Activated CD8-positive, alpha-beta T cell treated with anti-CD3 and anti-CD28 coated beads, Interleukin-2, amount 10 ng/mL, durations not matched to agents 7 days and 5 days (primary cell): ENCODE measurements at regions of chr1 and their contacts with region 1.

Region 1: DNA sequence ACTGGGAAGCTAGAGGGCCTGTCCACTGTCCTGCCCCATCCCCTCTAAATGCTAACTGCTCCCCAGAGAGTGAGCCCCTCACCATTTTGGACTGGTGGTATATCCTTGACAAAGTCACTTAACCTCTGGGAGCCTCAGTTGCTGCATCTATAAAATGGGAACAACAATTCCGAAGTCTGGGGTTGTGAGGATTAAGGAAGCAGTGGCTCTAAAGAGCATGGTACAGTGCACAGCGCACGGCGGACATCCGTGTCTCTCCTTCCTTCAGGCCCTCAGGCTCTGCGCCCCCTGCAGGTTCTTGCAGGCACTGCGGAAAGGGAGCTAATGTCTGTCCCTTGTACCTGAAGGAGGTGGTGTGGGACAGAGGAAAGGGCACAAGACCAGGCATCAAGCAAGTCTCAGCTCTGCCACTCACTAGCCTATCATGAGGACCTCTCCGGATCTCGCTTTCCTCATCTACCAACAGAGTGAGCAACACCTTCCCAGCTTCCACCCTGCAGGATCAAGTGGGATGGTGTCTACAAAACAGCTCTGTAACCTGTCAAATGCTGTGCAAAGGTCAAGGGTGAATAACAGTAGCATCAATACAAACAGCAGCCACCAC is 20.1 kb downstream of the ECE1 start:
- DNase-seq: peak; percentile 85
- ATAC-seq: peak; percentile 89
- H3K4me3 Mint-ChIP-seq: no peak overlapping the region
- H3K27ac Mint-ChIP-seq: no peak overlapping the region
- H3K4me1 Mint-ChIP-seq: peaks cover 14% of the 10 kb centered on the region
- H3K27me3 Mint-ChIP-seq: no peaks in the 10 kb centered on the region

Region 2: DNA sequence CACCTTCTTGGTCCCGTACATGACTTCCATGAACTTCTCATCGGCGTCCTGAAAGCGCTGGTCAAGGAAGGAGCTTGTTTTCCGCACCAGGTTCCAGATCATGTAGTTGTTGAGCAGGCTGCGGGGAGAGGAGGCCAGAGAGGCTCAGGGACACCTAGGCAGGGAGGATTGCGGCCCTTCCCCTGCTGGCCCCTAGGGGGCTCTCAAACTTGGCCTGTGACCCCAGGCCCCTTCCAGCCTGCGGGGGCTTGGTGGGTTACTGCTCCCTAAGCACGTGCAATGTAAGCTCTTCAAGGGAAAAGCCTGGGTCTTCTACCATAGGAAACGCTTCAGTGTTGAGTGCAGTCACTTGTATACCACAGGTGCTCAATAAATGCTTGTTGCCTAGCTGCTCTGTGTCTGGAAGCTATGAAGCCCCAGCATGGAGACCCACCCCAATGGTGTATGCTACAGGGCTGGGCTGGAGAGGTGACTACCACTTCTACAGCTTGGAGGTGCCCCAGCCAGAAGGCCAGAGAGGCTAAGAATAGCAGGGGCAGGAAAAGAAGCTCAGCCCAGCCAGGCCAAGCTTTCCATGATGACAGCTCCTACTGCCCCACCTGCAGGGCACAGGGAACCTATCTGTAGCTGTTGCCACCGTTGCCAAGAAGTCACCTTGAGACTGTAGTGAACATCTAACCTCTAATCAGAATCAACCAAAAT is 25.1 kb before region 1 on chr1:
- CTCF ChIA-PET with region 1: interaction called, 20 read pairs
- POLR2A ChIA-PET with region 1: no interaction called
- DNase-seq: no peak
- ATAC-seq: no peak
- H3K4me3 Mint-ChIP-seq: no peak overlapping the region
- H3K27ac Mint-ChIP-seq: no peak overlapping the region
- H3K4me1 Mint-ChIP-seq: no peaks in the 10 kb centered on the region
- H3K27me3 Mint-ChIP-seq: no peaks in the 10 kb centered on the region

Region 3: GRCh38 chr1:21302747-21303715 is 32.8 kb after region 1 on chr1:
- CTCF ChIA-PET with region 1: interaction called, 27 read pairs
- POLR2A ChIA-PET with region 1: no interaction called
- DNase-seq: no peak
- ATAC-seq: no peak
- H3K4me3 Mint-ChIP-seq: no peak overlapping the region
- H3K27ac Mint-ChIP-seq: no peak overlapping the region
- H3K4me1 Mint-ChIP-seq: peaks cover 55% of the 10 kb centered on the region
- H3K27me3 Mint-ChIP-seq: no peaks in the 10 kb centered on the region

Region 4: GRCh38 chr1:21324368-21325141 is 54.4 kb after region 1 on chr1:
- CTCF ChIA-PET with region 1: interaction called, 41 read pairs
- POLR2A ChIA-PET with region 1: no interaction called
- DNase-seq: peak; percentile 61
- ATAC-seq: peak; percentile 72
- H3K4me3 Mint-ChIP-seq: peak overlapping the region; percentile 42
- H3K27ac Mint-ChIP-seq: peak overlapping the region; percentile 75
- H3K4me1 Mint-ChIP-seq: peaks cover 70% of the 10 kb centered on the region
- H3K27me3 Mint-ChIP-seq: no peaks in the 10 kb centered on the region

Region 5: GRCh38 chr1:21355956-21356355 is 85.8 kb after region 1 on chr1:
- CTCF ChIA-PET with region 1: interaction called, 17 read pairs
- POLR2A ChIA-PET with region 1: no interaction called
- DNase-seq: no peak
- ATAC-seq: no peak
- H3K4me3 Mint-ChIP-seq: no peak overlapping the region
- H3K27ac Mint-ChIP-seq: no peak overlapping the region
- H3K4me1 Mint-ChIP-seq: peaks cover 2% of the 10 kb centered on the region
- H3K27me3 Mint-ChIP-seq: peaks cover 11% of the 10 kb centered on the region

Region 6: GRCh38 chr1:21749109-21749508 is 478.9 kb after region 1 on chr1:
- CTCF ChIA-PET with region 1: no interaction called
- POLR2A ChIA-PET with region 1: no interaction called
- DNase-seq: no peak
- ATAC-seq: no peak
- H3K4me3 Mint-ChIP-seq: no peak overlapping the region
- H3K27ac Mint-ChIP-seq: no peak overlapping the region
- H3K4me1 Mint-ChIP-seq: peaks cover under 1% of the 10 kb centered on the region
- H3K27me3 Mint-ChIP-seq: no peaks in the 10 kb centered on the region